ENCODE measurements at regions of chr5 and their contacts with region 1.

Region 1: DNA sequence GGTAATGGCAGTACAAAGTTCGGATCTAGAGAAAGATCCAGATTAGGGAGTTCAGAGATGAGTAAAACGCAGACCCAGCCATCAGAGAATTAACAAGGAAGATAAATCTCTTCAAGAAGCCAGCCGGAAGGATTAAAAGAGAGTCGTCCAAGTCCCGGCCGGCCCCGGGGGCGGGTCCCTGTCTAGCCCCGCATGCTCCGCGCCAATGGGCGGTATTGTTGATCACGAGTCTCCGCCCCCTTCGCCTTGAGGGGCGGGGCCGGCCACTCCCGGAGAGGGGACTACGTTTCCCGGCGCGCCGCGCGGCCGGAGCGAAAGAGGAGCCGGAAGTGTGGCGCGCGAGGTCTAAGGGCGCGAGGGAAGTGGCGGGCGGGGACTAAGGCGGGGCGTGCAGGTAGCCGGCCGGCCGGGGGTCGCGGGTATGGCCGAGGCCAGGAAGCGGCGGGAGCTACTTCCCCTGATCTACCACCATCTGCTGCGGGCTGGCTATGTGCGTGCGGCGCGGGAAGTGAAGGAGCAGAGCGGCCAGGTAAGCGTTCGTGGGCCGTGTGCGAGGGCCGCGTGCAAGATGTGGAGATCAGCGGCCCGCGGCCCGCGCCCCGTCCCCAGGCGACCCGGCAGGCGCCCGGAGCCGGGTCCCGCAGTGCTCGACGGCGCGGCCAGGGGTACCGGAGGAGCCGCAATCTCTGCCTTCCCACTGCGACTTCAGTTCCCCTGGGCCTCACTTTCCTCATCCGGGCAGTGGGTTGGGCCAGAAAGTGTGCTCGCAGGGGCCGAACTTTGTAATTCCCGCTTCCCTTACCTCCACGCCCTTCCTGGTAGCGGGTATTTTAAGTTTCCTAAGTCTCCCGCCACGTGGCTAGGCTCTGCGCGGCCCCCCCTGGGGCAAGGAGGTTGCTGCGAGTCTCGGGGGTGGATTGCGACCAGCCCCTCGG is at the start of gene TCOF1:
- DNase-seq: peak; percentile 93 to 99 (median 97)
- ATAC-seq: peak; percentile 99
- H3K4me3 ChIP-seq: peak within 1 kb of the TSS; percentile 62 to 74
- H3K4me3 Mint-ChIP-seq: peak within 1 kb of the TSS; percentile 82
- H3K27ac ChIP-seq: peak within 1 kb of the TSS; percentile 52 to 70
- H3K27ac Mint-ChIP-seq: peak within 1 kb of the TSS; percentile 87
- H3K4me1 ChIP-seq: peaks cover 18% of the 10 kb centered on the region
- H3K4me1 Mint-ChIP-seq: peaks cover 46% of the 10 kb centered on the region
- H3K27me3 ChIP-seq: no peaks in the 10 kb centered on the region
- H3K27me3 Mint-ChIP-seq: no peaks in the 10 kb centered on the region
- CTCF ChIP-seq: no peak
- total RNA-seq, gene TCOF1: 36.5 to 38.7 TPM

Region 2: DNA sequence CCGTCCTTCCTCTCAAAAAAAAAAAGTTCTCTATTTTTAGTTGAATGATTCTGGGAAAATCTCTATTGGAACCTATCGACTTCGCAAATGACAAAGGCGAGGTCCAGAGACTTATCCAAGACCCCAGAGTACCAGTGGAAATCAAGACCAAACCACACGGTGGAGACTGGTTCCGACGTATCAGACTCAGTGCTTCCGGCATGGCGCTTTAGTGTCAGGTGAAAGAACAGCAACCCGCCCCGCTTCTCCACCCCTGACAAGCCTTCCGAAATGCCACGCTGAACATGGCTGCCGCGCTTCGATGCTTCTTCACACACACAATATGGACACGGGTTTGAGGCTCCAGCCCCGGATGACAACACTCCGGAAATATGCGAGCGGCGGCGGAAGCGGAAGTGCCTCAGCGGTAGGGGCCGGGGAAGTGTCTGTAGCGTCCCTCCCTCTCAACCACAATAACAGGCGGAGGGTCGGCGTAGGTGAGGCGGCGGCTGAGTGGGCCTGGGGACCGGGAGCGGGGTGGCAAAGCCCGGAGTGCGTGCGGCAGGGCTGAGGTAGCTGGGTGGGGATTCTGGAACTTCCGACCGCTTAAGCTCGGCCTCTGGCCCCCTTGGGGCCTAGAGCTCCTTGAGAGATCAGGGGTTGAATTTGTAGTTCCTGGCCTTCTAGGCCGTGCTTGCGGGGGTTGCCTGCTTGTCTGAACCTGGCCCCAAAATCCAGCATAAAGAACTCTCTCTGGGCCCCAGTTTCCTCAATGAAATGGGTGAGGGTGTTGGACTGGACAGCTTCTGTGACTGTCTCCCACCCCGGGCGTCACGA is 1973.8 kb before region 1 on chr5 and contains the start of gene FBXO38:
- CTCF ChIA-PET with region 1: no interaction called
- POLR2A ChIA-PET with region 1: no interaction called
- intact Hi-C with region 1: loop called (anchors 5 kb)
- DNase-seq: peak; percentile 94 to 99 (median 97)
- ATAC-seq: peak; percentile 95
- H3K4me3 ChIP-seq: peak within 1 kb of the TSS; percentile 77 to 83
- H3K4me3 Mint-ChIP-seq: peak within 1 kb of the TSS; percentile 87
- H3K27ac ChIP-seq: peak within 1 kb of the TSS; percentile 97
- H3K27ac Mint-ChIP-seq: peak within 1 kb of the TSS; percentile 96
- H3K4me1 ChIP-seq: peaks cover 38% of the 10 kb centered on the region
- H3K4me1 Mint-ChIP-seq: peaks cover 68% of the 10 kb centered on the region
- H3K27me3 ChIP-seq: no peaks in the 10 kb centered on the region
- H3K27me3 Mint-ChIP-seq: no peaks in the 10 kb centered on the region
- CTCF ChIP-seq: no peak
- total RNA-seq, gene FBXO38: 45.5 to 48.7 TPM

Region 3: GRCh38 chr5:149960272-149961185 is 397.1 kb before region 1 on chr5 and contains the start of gene SLC26A2:
- CTCF ChIA-PET with region 1: no interaction called
- POLR2A ChIA-PET with region 1: no interaction called
- intact Hi-C with region 1: loop called in 1 of 2 experiments (anchors 5 kb)
- DNase-seq: peak; percentile 83 to 97 (median 93)
- ATAC-seq: peak; percentile 95
- H3K4me3 ChIP-seq: peak within 1 kb of the TSS; percentile 85 to 99
- H3K4me3 Mint-ChIP-seq: peak within 1 kb of the TSS; percentile 97
- H3K27ac ChIP-seq: peak within 1 kb of the TSS; percentile 66 to 77
- H3K27ac Mint-ChIP-seq: peak within 1 kb of the TSS; percentile 97
- H3K4me1 ChIP-seq: peaks cover 26% of the 10 kb centered on the region
- H3K4me1 Mint-ChIP-seq: peaks cover 39% of the 10 kb centered on the region
- H3K27me3 ChIP-seq: no peaks in the 10 kb centered on the region
- H3K27me3 Mint-ChIP-seq: no peaks in the 10 kb centered on the region
- CTCF ChIP-seq: no peak
- total RNA-seq, gene SLC26A2: 2.0 to 2.2 TPM

Region 4: GRCh38 chr5:150409638-150410523 is 52.3 kb after region 1 on chr5:
- CTCF ChIA-PET with region 1: no interaction called
- POLR2A ChIA-PET with region 1: interaction called, 3 read pairs
- intact Hi-C with region 1: loop called (anchors 1 kb)
- DNase-seq: peak in 8 of 9 experiments; percentile 15 to 80 (median 44)
- ATAC-seq: no peak
- H3K4me3 ChIP-seq: peak overlapping the region; percentile 88 to 90
- H3K4me3 Mint-ChIP-seq: peak overlapping the region; percentile 100
- H3K27ac ChIP-seq: peak overlapping the region; percentile 24 to 99
- H3K27ac Mint-ChIP-seq: peak overlapping the region; percentile 100
- H3K4me1 ChIP-seq: peaks cover 39% of the 10 kb centered on the region
- H3K4me1 Mint-ChIP-seq: peaks cover 45% of the 10 kb centered on the region
- H3K27me3 ChIP-seq: no peaks in the 10 kb centered on the region
- H3K27me3 Mint-ChIP-seq: no peaks in the 10 kb centered on the region
- CTCF ChIP-seq: no peak

Region 5: DNA sequence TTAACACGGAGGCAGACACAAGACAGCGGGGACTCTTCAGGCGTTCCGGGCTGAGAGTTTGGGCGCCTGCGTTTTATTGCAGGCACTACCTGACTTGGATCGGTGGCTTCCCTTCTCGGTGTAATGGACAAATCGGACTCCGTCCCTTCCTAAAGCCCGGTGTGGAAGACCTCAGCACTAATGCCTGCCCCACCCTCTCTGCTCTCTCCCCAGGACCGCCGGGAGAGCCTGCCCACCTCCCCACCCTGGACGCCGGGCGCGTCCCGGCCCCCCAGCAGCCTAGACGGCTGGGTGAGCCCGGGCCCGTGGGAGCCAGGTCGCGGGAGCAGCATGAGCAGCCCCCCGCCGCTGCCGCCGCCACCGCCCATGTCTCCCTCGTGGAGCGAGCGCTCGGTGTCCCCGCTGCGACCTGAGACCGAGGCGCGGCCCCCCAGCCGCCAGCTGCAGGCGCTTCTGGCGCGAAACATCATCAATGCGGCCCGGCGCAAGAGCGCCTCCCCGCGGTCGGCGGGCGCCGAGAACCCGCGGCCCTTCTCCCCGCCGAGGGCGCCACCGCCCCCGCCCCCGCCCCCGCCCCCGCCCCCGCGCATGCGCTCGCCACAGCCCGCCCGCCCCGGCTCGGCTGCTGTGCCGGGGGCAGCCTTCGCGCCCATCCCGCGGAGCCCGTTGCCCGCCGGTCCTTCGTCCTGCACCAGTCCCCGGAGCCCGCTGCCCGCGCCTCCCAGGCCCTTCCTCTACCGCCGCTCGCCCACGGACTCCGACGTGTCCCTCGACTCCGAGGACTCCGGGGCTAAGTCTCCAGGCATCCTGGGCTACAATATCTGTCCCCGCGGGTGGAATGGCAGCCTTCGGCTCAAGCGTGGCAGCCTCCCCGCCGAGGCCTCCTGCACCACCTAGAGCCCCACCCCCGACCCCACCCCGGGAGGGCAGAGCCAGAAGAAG is 298.9 kb after region 1 on chr5:
- CTCF ChIA-PET with region 1: no interaction called
- POLR2A ChIA-PET with region 1: no interaction called
- intact Hi-C with region 1: loop called (anchors 1 to 5 kb)
- DNase-seq: peak; percentile 61 to 90 (median 80)
- ATAC-seq: peak; percentile 93
- H3K4me3 ChIP-seq: peak overlapping the region; percentile 51 to 63
- H3K4me3 Mint-ChIP-seq: peak overlapping the region; percentile 78
- H3K27ac ChIP-seq: no peak overlapping the region
- H3K27ac Mint-ChIP-seq: no peak overlapping the region
- H3K4me1 ChIP-seq: peaks cover 6% of the 10 kb centered on the region
- H3K4me1 Mint-ChIP-seq: peaks cover 4% of the 10 kb centered on the region
- H3K27me3 ChIP-seq: no peaks in the 10 kb centered on the region
- H3K27me3 Mint-ChIP-seq: no peaks in the 10 kb centered on the region
- CTCF ChIP-seq: peak; percentile 53

Region 6: GRCh38 chr5:151080623-151081430 is 723.2 kb after region 1 on chr5 and contains the start of gene TNIP1:
- CTCF ChIA-PET with region 1: no interaction called
- POLR2A ChIA-PET with region 1: no interaction called
- intact Hi-C with region 1: loop called in 1 of 2 experiments (anchors 1 kb)
- DNase-seq: peak; percentile 87 to 97 (median 94)
- ATAC-seq: peak; percentile 84
- H3K4me3 ChIP-seq: peak within 1 kb of the TSS; percentile 76
- H3K4me3 Mint-ChIP-seq: peak within 1 kb of the TSS; percentile 93
- H3K27ac ChIP-seq: peak within 1 kb of the TSS; percentile 70 to 98
- H3K27ac Mint-ChIP-seq: peak within 1 kb of the TSS; percentile 95
- H3K4me1 ChIP-seq: peaks cover 56% of the 10 kb centered on the region
- H3K4me1 Mint-ChIP-seq: peaks cover 80% of the 10 kb centered on the region
- H3K27me3 ChIP-seq: no peaks in the 10 kb centered on the region
- H3K27me3 Mint-ChIP-seq: no peaks in the 10 kb centered on the region
- CTCF ChIP-seq: no peak
- total RNA-seq, gene TNIP1: 133 to 134 TPM

Measured in CD8-positive, alpha-beta T cell (primary cell).